Activated CD8-positive, alpha-beta T cell treated with anti-CD3 and anti-CD28 coated beads, Interleukin-2, amount 10 ng/mL, durations not matched to agents 7 days and 5 days (primary cell): ENCODE measurements at regions of chr17 and their contacts with region 1.

Region 1: GRCh38 chr17:43360739-43361505 is 37.9 kb upstream of the ARL4D start:
- DNase-seq: peak; percentile 97
- ATAC-seq: peak; percentile 83
- H3K4me3 Mint-ChIP-seq: peak overlapping the region; percentile 91
- H3K27ac Mint-ChIP-seq: peak overlapping the region; percentile 100
- H3K4me1 Mint-ChIP-seq: peaks cover 40% of the 10 kb centered on the region
- H3K27me3 Mint-ChIP-seq: no peaks in the 10 kb centered on the region

Region 2: GRCh38 chr17:43211480-43212402 is 149.2 kb before region 1 on chr17 and contains the start of gene TMEM106A:
- CTCF ChIA-PET with region 1: no interaction called
- POLR2A ChIA-PET with region 1: interaction called, 11 read pairs
- DNase-seq: peak; percentile 83
- ATAC-seq: peak; percentile 95
- H3K4me3 Mint-ChIP-seq: peak within 1 kb of the TSS; percentile 90
- H3K27ac Mint-ChIP-seq: peak within 1 kb of the TSS; percentile 82
- H3K4me1 Mint-ChIP-seq: peaks cover 30% of the 10 kb centered on the region
- H3K27me3 Mint-ChIP-seq: no peaks in the 10 kb centered on the region
- total RNA-seq, gene TMEM106A: 10.1 to 12.4 TPM

Region 3: DNA sequence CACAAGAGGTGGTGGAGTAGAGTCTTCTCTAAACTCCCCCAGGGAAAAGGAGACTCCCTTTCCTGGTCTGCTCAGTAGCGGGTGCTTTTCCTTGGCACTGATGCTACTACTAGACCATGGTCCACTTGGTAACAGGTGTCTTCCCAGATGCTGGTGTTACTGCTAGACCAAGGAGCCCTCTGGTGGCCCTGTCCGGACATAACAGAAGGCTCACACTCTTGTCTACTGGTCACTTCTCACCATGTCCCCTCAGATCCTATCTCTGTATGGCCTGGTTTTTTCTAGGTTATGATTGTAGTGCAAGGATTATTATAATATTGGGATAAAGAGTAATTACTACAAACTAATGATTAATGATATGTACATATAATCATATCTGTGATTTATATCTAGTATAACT is 11.8 kb before region 1 on chr17:
- CTCF ChIA-PET with region 1: no interaction called
- POLR2A ChIA-PET with region 1: interaction called, 54 read pairs
- DNase-seq: no peak
- ATAC-seq: no peak
- H3K4me3 Mint-ChIP-seq: no peak overlapping the region
- H3K27ac Mint-ChIP-seq: no peak overlapping the region
- H3K4me1 Mint-ChIP-seq: peaks cover 8% of the 10 kb centered on the region
- H3K27me3 Mint-ChIP-seq: no peaks in the 10 kb centered on the region

Region 4: GRCh38 chr17:43388359-43389045 is 27.6 kb after region 1 on chr17:
- CTCF ChIA-PET with region 1: interaction called, 39 read pairs
- POLR2A ChIA-PET with region 1: interaction called, 151 read pairs
- DNase-seq: peak; percentile 92
- ATAC-seq: peak; percentile 77
- H3K4me3 Mint-ChIP-seq: peak overlapping the region; percentile 82
- H3K27ac Mint-ChIP-seq: peak overlapping the region; percentile 95
- H3K4me1 Mint-ChIP-seq: peaks cover 27% of the 10 kb centered on the region
- H3K27me3 Mint-ChIP-seq: no peaks in the 10 kb centered on the region

Region 5: GRCh38 chr17:43442711-43443110 is 81.8 kb after region 1 on chr17:
- CTCF ChIA-PET with region 1: no interaction called
- POLR2A ChIA-PET with region 1: no interaction called
- DNase-seq: no peak
- ATAC-seq: no peak
- H3K4me3 Mint-ChIP-seq: no peak overlapping the region
- H3K27ac Mint-ChIP-seq: no peak overlapping the region
- H3K4me1 Mint-ChIP-seq: no peaks in the 10 kb centered on the region
- H3K27me3 Mint-ChIP-seq: peaks cover 2% of the 10 kb centered on the region